Adrenal gland (tissue), 19 donors: ENCODE measurements at regions of chr16 and their contacts with region 1.

Region 1: DNA sequence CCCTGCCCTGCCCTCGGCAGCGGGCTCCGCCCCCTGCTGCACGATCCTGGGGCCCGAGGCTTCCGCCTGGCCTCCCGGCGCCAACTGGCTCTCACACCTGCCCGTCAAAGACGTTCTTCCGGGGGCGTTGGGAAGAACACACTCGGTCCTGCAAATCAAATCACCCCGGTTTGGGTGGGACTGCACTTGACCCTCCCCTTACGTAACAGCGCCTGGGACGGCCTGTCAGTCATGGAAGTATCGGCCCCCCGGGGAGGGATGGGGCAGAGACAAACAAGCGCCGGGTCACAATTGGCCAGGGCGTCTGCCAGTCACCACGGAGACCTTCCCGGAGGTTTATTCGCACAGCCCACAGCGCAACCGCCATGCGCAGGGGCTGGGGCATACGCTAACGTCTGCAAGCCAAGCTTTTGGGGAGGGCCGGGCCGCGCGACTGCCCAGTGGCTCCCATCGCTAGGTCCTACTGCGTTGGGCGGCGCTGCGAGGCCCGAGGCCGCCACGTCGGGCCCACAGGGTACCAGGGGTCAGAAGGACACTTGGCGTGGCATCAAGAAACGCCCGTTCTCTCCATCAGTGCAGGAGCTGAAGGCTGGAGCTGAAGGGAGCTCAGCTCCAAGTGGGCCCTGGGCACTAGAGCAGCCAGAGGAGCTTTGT is 388 bp upstream of the AKTIP start:
- DNase-seq: peak; percentile 100
- H3K4me3 ChIP-seq: peak overlapping the region in 2 of 4 donors; percentile 77 to 96
- H3K27ac ChIP-seq: peak overlapping the region in 4 of 5 donors; percentile 84 to 91 (median 90)
- H3K4me1 ChIP-seq: peaks cover 12 to 31% of the 10 kb centered on the region in 2 donors
- H3K27me3 ChIP-seq: no peaks in the 10 kb centered on the region
- CTCF ChIP-seq: no peak
- POLR2A ChIP-seq: peak; percentile 89 to 92

Region 2: DNA sequence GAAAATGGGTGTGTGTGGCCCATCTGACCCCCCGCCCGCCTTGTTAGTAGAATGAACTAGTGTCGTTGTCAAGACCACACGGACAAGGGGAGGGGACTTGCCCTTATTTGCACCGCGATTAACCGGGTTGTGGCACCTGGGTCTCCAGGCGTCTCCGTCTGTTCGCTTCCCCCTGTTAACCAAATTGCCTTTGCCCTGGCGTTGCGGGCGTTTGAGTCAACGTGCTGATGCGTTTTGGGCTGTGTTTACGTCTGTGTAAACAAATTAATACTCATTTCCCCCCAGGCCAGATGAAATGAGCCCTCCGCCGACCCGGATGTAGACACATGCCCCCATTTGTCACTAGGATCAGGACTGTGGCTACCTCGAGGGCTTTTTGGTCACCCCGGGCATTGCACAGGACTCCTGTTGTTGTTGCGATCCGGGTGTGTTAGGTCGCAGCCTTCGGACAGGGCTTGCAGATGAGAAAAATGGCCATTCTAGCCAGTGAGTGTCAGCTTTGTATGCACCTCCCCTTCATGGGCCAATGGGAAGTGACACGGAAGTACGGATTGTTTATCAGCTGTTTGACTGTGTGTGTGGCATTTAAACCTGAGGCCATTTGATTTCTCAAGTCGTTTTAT is 68.2 kb before region 1 on chr16:
- intact Hi-C with region 1: loop called in 1 of 2 experiments (anchors 10 kb)
- DNase-seq: peak; percentile 78 to 94 (median 87)
- H3K4me3 ChIP-seq: peak overlapping the region; percentile 26 to 94 (median 82)
- H3K27ac ChIP-seq: peak overlapping the region; percentile 47 to 95 (median 89)
- H3K4me1 ChIP-seq: peaks cover 0 to 26% of the 10 kb centered on the region in 2 donors
- H3K27me3 ChIP-seq: no peaks in the 10 kb centered on the region
- CTCF ChIP-seq: no peak
- POLR2A ChIP-seq: peak in 1 of 2 donors; percentile 83

Region 3: GRCh38 chr16:53600126-53600525 is 96.7 kb after region 1 on chr16:
- intact Hi-C with region 1: no loop called
- DNase-seq: no peak
- H3K4me3 ChIP-seq: no peak overlapping the region
- H3K27ac ChIP-seq: no peak overlapping the region
- H3K4me1 ChIP-seq: no peaks in the 10 kb centered on the region
- H3K27me3 ChIP-seq: no peaks in the 10 kb centered on the region
- CTCF ChIP-seq: no peak
- POLR2A ChIP-seq: no peak